ENCODE measurements at regions of chr19 and their contacts with region 1.

Region 1: DNA sequence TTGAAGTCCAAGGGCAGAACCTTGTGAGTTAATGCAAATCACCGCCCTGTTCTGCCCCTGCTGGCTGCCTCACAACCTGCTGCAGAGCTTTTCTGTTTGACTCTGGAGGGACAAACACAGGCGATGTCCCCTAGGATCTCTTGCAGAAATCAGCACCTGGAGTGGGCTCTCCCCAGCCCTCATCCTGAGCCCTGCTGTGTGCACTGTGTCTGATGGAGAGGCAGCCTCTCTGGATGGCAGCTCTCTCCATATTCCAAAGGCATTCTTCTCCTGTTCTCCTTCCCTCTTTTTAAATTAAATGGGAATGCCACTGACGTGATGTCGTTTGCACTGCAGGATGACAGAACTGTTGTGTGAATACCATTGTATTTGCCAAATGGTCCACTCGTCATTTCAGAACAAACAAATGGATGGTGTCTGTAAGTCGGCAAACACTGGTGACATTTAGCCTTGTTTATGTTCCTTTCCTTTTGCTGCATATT is 184.1 kb downstream of the ZNF536 start:
- DNase-seq: no peak
- H3K4me3 ChIP-seq: no peak overlapping the region
- H3K27ac ChIP-seq: no peak overlapping the region
- H3K4me1 ChIP-seq: no peaks in the 10 kb centered on the region
- H3K27me3 ChIP-seq: no peaks in the 10 kb centered on the region
- CTCF ChIP-seq: no peak

Region 2: DNA sequence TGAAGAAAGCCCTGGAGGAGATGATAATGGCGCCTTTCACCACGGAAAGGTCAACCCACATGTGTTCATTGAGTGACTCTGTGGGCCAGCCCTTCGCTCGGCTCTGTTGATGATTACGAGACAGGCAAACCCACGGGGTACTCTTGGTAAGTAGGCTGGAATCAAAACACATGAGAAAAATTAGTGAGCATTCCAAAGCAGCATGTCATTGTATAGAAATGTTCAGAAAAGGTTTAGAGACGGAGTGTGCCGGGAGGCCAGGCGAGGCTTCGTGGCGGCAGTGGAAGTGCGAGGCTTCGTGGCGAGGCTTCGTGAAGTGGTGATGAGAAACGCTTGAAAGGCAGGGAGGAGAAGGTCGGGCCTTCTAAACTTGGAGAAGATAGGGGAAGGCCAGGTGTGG is 39.7 kb before region 1 on chr19:
- CTCF ChIA-PET with region 1: no interaction called
- dilution Hi-C with region 1: no loop called
- in situ Hi-C with region 1: no loop called
- intact Hi-C with region 1: no loop called
- DNase-seq: no peak
- H3K4me3 ChIP-seq: no peak overlapping the region
- H3K27ac ChIP-seq: no peak overlapping the region
- H3K4me1 ChIP-seq: no peaks in the 10 kb centered on the region
- H3K27me3 ChIP-seq: no peaks in the 10 kb centered on the region
- CTCF ChIP-seq: no peak

Region 3: DNA sequence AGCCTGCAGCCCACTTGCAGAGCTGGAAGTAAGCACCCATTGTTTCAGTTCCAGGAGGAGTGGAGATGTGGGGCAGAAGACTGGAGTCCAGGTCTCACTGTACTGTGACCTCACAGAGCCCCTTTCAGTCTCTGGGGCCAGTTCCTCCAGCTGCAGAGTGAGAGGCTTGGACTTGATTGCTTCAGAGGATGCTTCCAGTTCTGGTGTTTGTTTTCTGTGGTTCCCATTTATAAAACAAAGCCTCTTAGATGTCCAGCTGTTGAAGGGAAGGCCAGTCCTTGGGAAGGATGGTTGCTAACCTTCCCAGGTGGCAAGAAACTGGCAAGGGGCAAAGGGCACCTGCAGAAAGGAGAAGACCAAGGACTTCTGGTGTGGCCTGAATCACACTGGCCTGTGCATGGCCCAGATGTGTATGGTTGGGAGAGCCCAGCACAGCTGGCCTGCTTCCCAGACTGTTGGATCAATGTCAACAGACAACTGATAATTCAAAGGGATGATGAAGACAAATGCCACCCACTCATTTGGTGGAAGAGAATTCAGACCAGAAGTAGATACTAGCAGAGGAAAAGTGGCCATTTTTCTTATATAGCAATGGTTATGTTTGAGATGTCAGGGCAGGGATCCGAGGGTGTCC is 34.4 kb after region 1 on chr19:
- CTCF ChIA-PET with region 1: no interaction called
- dilution Hi-C with region 1: loop called (anchors 5 kb)
- in situ Hi-C with region 1: no loop called
- intact Hi-C with region 1: no loop called
- DNase-seq: no peak
- H3K4me3 ChIP-seq: no peak overlapping the region
- H3K27ac ChIP-seq: no peak overlapping the region
- H3K4me1 ChIP-seq: no peaks in the 10 kb centered on the region
- H3K27me3 ChIP-seq: no peaks in the 10 kb centered on the region
- CTCF ChIP-seq: no peak

Region 4: DNA sequence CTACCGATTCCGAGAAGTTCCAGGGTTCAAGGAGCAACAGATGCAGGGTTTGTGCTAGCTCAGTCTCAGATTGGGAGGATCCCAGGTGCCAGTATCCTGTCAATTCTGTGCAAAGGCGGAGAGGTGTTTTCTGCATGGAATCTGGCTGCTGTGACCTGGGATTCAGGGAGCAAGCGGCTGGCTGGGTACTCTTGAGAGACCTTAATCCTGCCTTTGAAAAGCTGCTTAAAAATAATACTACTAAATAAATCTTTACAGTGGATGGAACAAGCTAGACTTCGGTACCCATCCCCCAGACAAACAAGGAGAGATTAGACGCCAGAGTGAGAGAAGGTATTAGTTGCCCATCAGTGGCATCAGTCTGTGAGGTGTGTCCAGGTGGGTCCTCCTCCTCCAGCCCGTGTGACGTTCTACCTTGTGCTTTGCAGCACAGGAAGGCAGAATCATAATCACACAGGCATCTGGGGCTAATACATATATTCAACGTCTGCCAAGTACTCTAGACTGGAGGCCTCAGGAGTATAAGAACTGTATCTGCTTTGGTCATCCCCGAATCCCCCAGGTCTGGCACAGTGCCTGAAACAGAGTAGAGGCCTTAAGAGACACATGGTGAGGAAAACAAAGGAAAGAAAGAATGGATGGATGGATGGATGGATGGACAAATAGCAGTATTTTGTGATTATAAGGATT is 46.5 kb after region 1 on chr19:
- CTCF ChIA-PET with region 1: no interaction called
- dilution Hi-C with region 1: no loop called
- in situ Hi-C with region 1: no loop called
- intact Hi-C with region 1: no loop called
- DNase-seq: no peak
- H3K4me3 ChIP-seq: no peak overlapping the region
- H3K27ac ChIP-seq: no peak overlapping the region
- H3K4me1 ChIP-seq: no peaks in the 10 kb centered on the region
- H3K27me3 ChIP-seq: no peaks in the 10 kb centered on the region
- CTCF ChIP-seq: no peak